ENCODE measurements at regions of chr11 and their contacts with region 1.

Region 1: GRCh38 chr11:86869966-86870570 is 69.7 kb downstream of the PRSS23 start:
- DNase-seq: peak; percentile 71
- H3K4me3 Mint-ChIP-seq: no peak overlapping the region
- H3K27ac Mint-ChIP-seq: no peak overlapping the region
- H3K4me1 Mint-ChIP-seq: peaks cover 5% of the 10 kb centered on the region
- H3K27me3 Mint-ChIP-seq: no peaks in the 10 kb centered on the region
- CTCF ChIP-seq: peak; percentile 81

Region 2: GRCh38 chr11:86535773-86536172 is 334.3 kb before region 1 on chr11:
- CTCF ChIA-PET with region 1: no interaction called
- POLR2A ChIA-PET with region 1: no interaction called
- intact Hi-C with region 1: no loop called
- DNase-seq: no peak
- H3K4me3 Mint-ChIP-seq: no peak overlapping the region
- H3K27ac Mint-ChIP-seq: no peak overlapping the region
- H3K4me1 Mint-ChIP-seq: no peaks in the 10 kb centered on the region
- H3K27me3 Mint-ChIP-seq: no peaks in the 10 kb centered on the region
- CTCF ChIP-seq: no peak

Region 3: GRCh38 chr11:86848861-86849260 is 21.2 kb before region 1 on chr11:
- CTCF ChIA-PET with region 1: interaction called, 17 read pairs
- POLR2A ChIA-PET with region 1: no interaction called
- intact Hi-C with region 1: no loop called
- DNase-seq: no peak
- H3K4me3 Mint-ChIP-seq: no peak overlapping the region
- H3K27ac Mint-ChIP-seq: no peak overlapping the region
- H3K4me1 Mint-ChIP-seq: no peaks in the 10 kb centered on the region
- H3K27me3 Mint-ChIP-seq: no peaks in the 10 kb centered on the region
- CTCF ChIP-seq: no peak

Region 4: DNA sequence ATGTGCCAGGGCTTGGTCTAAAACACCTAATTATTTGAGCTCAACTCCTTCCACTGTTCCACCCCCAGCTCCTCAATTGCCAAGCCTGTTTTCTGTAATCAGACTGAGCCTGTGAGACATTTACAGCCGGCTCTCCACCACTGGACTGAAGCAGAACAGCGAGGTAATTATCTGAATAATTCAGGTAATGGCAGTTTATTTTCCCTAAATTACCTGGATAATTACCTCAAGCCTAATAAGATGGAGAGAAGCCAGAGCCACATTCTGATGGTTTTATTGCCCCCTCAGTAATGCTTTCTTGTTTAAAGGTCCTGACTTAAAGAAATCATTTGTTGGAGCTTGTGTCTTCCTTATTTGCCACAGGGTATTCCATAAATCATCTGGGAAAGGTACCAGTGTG is 21.0 kb after region 1 on chr11:
- CTCF ChIA-PET with region 1: interaction called, 16 read pairs
- POLR2A ChIA-PET with region 1: no interaction called
- intact Hi-C with region 1: no loop called
- DNase-seq: no peak
- H3K4me3 Mint-ChIP-seq: no peak overlapping the region
- H3K27ac Mint-ChIP-seq: no peak overlapping the region
- H3K4me1 Mint-ChIP-seq: no peaks in the 10 kb centered on the region
- H3K27me3 Mint-ChIP-seq: no peaks in the 10 kb centered on the region
- CTCF ChIP-seq: no peak

Region 5: GRCh38 chr11:86904001-86904400 is 33.9 kb after region 1 on chr11:
- CTCF ChIA-PET with region 1: interaction called, 78 read pairs
- POLR2A ChIA-PET with region 1: no interaction called
- intact Hi-C with region 1: no loop called
- DNase-seq: no peak
- H3K4me3 Mint-ChIP-seq: no peak overlapping the region
- H3K27ac Mint-ChIP-seq: no peak overlapping the region
- H3K4me1 Mint-ChIP-seq: no peaks in the 10 kb centered on the region
- H3K27me3 Mint-ChIP-seq: no peaks in the 10 kb centered on the region
- CTCF ChIP-seq: no peak

Region 6: DNA sequence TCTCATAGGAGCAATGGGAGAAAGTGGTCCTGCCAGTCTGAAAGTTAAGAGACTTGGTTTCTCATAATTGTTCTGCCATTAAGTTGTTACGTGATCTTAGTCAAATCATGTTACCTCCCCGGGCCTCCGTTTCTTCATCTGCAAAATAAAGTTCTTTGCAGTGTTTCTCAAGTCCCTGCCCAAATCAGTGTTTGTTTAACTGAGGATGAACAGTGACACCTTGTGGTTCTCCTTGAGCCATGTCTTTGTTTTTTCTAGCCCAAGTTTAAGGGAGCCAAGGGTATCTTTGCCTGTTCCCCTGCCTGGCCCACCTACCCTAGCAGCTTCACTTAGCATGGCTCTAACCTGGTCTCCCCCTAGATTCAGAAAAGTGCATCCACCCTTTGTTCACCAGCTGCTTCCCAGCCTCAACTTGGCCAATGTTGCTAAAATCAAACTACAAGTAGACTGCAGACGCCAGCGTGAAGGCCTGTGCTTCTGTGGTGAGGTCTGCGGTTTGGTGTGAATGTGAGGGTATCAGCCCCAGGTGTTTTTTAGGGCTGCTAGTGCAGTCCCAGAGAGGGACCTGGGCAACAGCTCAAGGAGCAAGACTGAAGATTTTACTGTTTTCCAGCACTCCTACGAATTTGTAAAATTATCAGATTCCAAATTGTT is 49.6 kb after region 1 on chr11:
- CTCF ChIA-PET with region 1: interaction called, 401 read pairs
- POLR2A ChIA-PET with region 1: interaction called, 4 read pairs
- intact Hi-C with region 1: loop called (anchors 1 kb)
- DNase-seq: peak; percentile 68
- H3K4me3 Mint-ChIP-seq: no peak overlapping the region
- H3K27ac Mint-ChIP-seq: no peak overlapping the region
- H3K4me1 Mint-ChIP-seq: peaks cover 19% of the 10 kb centered on the region
- H3K27me3 Mint-ChIP-seq: no peaks in the 10 kb centered on the region
- CTCF ChIP-seq: peak; percentile 69

Region 7: DNA sequence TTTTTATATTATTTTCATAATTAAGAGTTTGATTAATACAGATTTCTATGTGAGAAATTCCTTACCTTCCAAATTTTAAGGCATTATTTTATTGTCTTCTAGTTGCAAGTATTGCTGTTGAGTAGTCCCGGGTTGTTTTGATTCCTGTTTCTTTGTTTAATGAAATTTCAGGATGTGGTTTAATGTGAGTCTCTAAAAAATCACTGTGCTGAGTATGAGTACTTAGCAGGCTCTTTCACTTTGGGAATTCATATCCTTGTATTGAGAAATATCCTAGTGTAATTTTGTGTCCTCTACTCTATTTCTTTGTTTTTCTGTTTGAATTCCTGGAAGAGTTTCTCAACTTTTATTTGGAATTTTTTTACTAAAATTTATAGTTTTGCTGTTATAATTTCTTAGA is 280.9 kb after region 1 on chr11:
- CTCF ChIA-PET with region 1: no interaction called
- POLR2A ChIA-PET with region 1: no interaction called
- intact Hi-C with region 1: no loop called
- DNase-seq: peak; percentile 9
- H3K4me3 Mint-ChIP-seq: no peak overlapping the region
- H3K27ac Mint-ChIP-seq: peak overlapping the region; percentile 16
- H3K4me1 Mint-ChIP-seq: peaks cover 16% of the 10 kb centered on the region
- H3K27me3 Mint-ChIP-seq: no peaks in the 10 kb centered on the region
- CTCF ChIP-seq: no peak

Region 8: DNA sequence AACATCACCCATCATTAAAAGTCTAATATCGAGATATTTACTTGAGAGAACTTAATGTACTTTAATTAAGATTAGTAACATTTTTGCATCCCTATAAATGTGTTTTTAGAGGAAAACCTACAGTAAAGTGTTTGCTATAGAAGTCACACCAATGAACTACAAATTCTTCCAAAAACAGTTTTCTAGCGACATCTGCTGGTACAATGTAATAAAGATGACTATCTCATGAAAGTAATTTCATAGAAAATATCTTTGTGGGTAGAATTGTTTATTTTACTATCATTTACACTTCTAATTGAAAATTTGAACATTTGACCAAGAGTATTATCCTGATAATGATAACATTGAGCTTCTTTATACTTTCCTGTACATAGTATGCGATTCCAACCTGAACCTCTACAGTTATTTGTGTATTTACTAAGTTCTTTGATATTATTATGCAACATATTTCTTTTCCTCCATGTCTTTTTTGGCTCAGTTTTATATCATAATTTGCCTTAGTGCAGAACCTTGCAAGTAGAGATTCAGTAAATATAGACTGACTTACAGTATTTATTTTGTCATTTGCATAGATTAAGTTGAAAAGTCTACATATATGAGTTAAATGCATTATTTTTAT is 420.3 kb after region 1 on chr11:
- CTCF ChIA-PET with region 1: interaction called, 14 read pairs
- POLR2A ChIA-PET with region 1: no interaction called
- intact Hi-C with region 1: loop called (anchors 2 kb)
- DNase-seq: peak; percentile 70
- H3K4me3 Mint-ChIP-seq: no peak overlapping the region
- H3K27ac Mint-ChIP-seq: no peak overlapping the region
- H3K4me1 Mint-ChIP-seq: peaks cover 4% of the 10 kb centered on the region
- H3K27me3 Mint-ChIP-seq: no peaks in the 10 kb centered on the region
- CTCF ChIP-seq: peak; percentile 64

Measured in MCF 10A (cell line).